Ascending aorta (tissue), 2 donors: ENCODE measurements at regions of chr6 and their contacts with region 1.

Region 1: GRCh38 chr6:42043787-42044475 is 6.4 kb upstream of the TAF8 start:
- DNase-seq: peak; percentile 58 to 89
- H3K4me3 ChIP-seq: peak overlapping the region; percentile 5 to 6
- H3K27ac ChIP-seq: peak overlapping the region in 1 of 2 donors; percentile 95
- H3K4me1 ChIP-seq: peaks cover 17 to 29% of the 10 kb centered on the region in 2 donors
- H3K27me3 ChIP-seq: no peaks in the 10 kb centered on the region
- CTCF ChIP-seq: peak; percentile 89 to 95 (median 92)

Region 2: GRCh38 chr6:41591859-41592502 is 451.9 kb before region 1 on chr6:
- intact Hi-C with region 1: no loop called
- DNase-seq: peak in 1 of 2 donors; percentile 85
- H3K4me3 ChIP-seq: no peak overlapping the region
- H3K27ac ChIP-seq: no peak overlapping the region
- H3K4me1 ChIP-seq: no peaks in the 10 kb centered on the region
- H3K27me3 ChIP-seq: no peaks in the 10 kb centered on the region
- CTCF ChIP-seq: peak; percentile 84 to 89 (median 89)

Region 3: DNA sequence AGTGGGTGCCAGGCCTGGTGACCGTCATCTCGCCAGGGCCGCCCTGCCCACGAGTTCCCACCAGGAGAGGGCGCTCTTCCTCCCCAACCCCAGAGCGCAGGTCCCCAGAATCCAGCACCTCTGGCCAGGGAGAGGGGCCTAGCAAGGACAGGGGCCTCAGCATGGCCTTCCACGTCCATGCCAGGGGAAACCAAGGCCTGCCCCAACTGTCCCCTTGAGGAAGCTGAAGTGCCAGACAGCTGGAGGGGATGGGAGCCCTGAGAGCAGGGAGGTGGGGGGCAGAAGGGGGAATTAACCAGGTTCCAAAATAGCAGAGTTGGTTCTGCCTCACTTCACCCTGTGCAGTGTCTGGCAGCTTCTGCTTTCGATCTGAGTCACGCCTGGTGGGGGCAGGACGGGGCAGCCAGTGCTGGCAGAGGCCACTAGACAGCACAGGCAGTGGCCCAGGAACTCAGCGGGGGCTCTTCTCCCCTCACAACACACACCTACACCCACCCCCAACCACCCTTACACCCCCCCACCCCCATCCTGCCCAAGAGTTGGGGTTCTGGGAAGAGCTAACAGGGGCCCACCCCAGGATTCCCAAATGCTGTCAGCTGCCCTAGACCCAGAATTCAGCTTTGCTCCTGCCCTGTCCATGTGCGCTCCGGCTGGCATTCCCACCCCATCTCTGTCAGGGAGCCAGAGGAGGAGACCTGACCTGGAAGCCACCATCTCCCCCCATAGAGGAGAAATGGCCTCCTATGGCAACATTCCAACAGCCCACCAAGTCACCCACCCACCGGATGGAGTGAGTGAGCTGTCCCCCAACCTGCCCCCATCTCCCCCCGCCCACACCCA is 337.7 kb before region 1 on chr6:
- intact Hi-C with region 1: loop called (anchors 10 kb)
- DNase-seq: peak; percentile 74 to 92
- H3K4me3 ChIP-seq: peak overlapping the region in 1 of 2 donors; percentile 7
- H3K27ac ChIP-seq: peak overlapping the region; percentile 86 to 90
- H3K4me1 ChIP-seq: peaks cover 7 to 29% of the 10 kb centered on the region in 2 donors
- H3K27me3 ChIP-seq: no peaks in the 10 kb centered on the region
- CTCF ChIP-seq: peak; percentile 77 to 83 (median 78)

Region 4: GRCh38 chr6:41846666-41847237 is 197.2 kb before region 1 on chr6:
- intact Hi-C with region 1: loop called (anchors 1 kb)
- DNase-seq: peak in 1 of 2 donors; percentile 68
- H3K4me3 ChIP-seq: no peak overlapping the region
- H3K27ac ChIP-seq: no peak overlapping the region
- H3K4me1 ChIP-seq: no peaks in the 10 kb centered on the region
- H3K27me3 ChIP-seq: no peaks in the 10 kb centered on the region
- CTCF ChIP-seq: peak; percentile 42 to 64 (median 60)

Region 5: DNA sequence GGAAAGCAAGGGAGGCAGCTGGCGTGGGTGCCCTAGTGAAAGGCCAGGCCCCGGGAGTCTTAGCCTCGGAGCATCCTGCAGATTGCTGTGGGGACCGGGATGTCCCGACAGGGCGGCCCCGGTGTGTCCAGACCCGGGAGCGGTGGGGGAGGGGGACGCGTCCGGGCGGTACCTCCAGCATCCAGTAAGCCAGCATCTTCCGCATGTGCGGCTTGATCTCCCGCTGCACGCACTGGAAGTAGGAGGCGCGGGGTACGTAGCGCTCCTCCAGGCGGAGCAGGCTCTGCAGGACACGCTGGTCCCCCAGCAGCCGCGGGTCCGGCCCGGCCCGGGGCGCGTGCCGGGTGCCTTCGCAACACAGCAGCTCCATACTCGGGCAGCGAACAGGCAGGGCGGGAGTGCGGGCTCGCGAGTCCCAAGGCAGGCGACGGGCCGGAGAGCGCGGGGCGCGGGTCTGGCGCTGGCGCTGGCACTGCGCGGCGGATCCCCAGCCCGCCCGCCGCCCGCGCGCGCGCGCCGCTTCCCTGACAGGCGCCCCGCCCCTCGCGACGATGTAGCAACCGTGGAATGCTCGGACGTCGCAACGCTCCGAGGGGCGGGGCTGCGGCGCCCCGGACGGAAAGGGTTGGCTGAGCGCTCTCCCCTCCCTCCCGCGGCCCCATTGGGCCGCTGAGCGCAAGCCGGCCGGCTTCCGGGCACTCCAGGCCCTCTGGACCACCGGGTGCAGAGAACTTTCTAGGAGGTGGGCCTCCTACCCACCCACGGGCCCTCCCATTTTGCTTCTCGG is 102.5 kb before region 1 on chr6 and contains the start of gene CCND3:
- intact Hi-C with region 1: loop called (anchors 1 kb)
- DNase-seq: peak; percentile 57 to 95
- H3K4me3 ChIP-seq: peak within 1 kb of the TSS; percentile 84 to 93
- H3K27ac ChIP-seq: peak within 1 kb of the TSS; percentile 72 to 83
- H3K4me1 ChIP-seq: peaks cover 4 to 20% of the 10 kb centered on the region in 2 donors
- H3K27me3 ChIP-seq: no peaks in the 10 kb centered on the region
- CTCF ChIP-seq: peak in 1 of 3 experiments; percentile 1
- total RNA-seq, gene CCND3: 130 TPM